BJ (cell line): ENCODE measurements at regions of chr7 and their contacts with region 1.

Region 1: DNA sequence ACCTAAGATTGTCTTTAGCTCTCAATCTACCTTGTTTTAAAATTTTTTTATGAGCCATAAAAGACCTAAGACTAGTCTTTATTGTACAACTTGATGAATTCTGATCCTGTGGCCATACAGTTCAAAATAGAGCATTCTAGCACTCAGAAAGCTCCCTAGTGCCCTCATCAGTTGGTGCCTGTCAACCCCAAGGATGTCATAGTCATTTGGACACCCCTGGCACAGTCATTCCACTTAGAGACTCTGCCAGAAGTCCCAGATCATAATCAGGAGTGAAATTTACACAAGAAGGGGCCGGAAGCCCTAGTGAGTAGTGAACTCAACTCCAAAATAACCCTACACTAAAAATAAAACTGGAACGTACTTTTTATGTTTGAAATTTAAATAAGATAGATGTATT is 80.0 kb upstream of the INSIG1 start:
- DNase-seq: no peak
- H3K4me3 ChIP-seq: no peak overlapping the region
- H3K27me3 ChIP-seq: peaks cover 3% of the 10 kb centered on the region; the same call in 1 of the 2 replicates
- CTCF ChIP-seq: no peak

Region 2: DNA sequence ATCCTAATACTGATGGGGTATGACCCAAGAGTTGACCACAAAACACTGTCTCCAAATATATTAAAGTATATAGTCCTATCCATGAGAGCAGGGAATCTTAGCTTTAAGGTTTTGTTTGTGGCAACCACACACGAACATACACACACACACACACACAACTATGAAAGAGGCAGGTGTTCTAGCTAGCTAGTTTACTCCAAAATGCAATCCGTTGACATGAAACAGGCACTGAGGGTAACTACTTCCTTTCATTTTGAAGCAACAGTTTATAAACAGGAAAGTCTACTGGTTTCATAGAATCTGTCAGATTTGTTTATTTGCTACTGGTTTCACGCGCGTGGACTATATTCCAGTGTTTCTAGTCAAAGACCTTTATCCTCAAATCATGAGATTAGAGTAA is 132.7 kb before region 1 on chr7:
- CTCF ChIA-PET with region 1: no interaction called
- POLR2A ChIA-PET with region 1: no interaction called
- DNase-seq: no peak
- H3K4me3 ChIP-seq: no peak overlapping the region
- H3K27me3 ChIP-seq: no peaks in the 10 kb centered on the region
- CTCF ChIP-seq: no peak

Region 3: DNA sequence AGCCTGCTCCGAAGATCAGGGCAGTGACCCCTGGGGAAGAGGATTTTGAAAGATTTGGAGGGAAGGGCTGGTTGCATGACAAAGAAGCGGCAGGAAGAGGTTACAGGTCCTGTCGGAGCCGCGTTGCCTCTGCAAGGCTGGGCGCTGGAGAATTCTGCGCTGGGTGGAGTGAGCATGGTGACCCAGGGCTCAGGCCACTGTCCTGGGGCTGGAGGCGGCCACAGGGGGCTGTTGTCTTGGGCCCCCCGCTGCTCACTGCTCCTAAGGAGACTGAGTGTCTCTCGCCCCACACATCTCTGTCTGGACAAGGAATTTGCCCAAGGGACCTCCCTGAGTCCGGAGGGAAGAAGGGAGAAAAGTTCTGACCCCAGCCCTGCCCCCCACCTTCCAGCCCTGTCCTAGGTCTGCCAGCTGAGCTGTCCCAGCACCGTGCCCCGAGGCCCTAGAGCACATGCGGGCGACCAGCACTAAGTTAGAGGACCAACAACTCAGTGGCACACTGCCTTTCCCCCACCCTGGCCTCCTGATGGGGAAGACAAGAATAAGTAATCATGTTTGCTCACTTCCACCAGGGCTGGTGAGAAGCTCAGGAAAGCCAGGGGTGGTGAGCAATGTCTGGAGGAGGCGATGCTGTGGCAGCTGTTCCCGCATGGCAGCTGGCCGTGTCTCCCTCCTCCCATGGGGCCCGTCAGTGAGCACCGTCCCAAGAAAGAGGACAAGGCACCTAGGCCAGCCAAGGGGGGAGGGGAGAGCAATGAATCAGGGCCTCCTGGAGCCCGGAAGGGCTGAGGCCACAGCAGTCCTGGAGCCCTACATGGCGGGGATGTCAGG is 10.6 kb after region 1 on chr7:
- CTCF ChIA-PET with region 1: interaction called, 11 read pairs
- POLR2A ChIA-PET with region 1: no interaction called
- DNase-seq: no peak
- H3K4me3 ChIP-seq: no peak overlapping the region
- H3K27me3 ChIP-seq: no peaks in the 10 kb centered on the region
- CTCF ChIP-seq: no peak

Region 4: DNA sequence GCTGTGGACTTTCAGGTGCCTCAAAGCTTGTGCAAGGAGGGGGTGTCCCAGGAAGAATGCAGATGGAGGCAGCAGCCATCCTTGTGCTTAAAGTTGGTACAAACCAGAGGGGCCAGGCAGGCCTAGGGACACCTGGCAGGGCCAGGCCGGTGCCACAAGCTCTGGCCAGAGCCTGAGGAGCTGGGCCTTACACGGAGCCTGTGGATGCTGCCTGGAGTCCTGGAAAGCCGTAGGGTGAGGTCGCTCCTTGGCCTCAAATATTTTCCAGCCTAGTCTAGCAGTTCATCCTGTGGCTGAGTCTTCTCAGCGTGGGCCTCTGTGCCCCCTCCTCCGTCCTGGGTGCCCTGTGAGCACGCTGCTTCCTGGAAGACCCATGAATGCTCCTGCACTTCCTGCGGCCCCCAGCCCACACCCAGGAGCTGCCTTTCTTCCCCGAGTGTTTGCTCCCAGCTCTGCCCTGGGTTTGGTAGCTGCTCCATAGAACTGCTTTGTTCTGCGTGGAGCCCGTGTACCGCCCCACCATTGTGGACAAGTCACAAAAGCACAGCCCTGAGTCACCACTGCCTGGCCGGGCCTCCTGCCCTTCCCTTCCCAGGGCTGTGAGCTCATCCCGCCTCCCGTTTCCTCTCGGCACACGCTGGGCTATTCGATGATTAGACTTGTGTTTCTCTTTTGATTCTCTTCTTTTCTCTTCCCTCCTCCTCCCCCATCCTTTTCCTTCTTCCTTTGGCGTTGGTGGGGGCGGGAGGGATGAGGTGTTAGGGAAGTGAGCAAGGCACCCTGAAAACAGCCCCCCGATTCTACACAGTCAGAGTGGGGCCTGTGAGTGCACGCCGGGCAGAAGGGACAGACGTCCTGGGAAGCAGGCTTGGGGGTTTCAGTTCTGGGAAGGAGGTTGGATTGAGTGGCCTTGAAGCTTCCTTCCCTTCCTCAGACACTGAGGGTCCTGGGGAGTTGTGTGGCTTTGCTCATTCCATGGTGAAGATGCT is 667.8 kb after region 1 on chr7:
- CTCF ChIA-PET with region 1: no interaction called
- POLR2A ChIA-PET with region 1: no interaction called
- DNase-seq: no peak
- H3K4me3 ChIP-seq: no peak overlapping the region
- H3K27me3 ChIP-seq: no peaks in the 10 kb centered on the region
- CTCF ChIP-seq: no peak